ENCODE measurements at regions of chrX and their contacts with region 1.

Region 1: GRCh38 chrX:18390941-18391538 is 34.4 kb upstream of the CDKL5 start:
- DNase-seq: peak; percentile 53
- H3K4me3 ChIP-seq: no peak overlapping the region
- H3K27ac ChIP-seq: no peak overlapping the region
- H3K4me1 ChIP-seq: no peaks in the 10 kb centered on the region
- H3K27me3 ChIP-seq: no peaks in the 10 kb centered on the region
- CTCF ChIP-seq: peak; percentile 54 to 73 (median 65)
- POLR2A ChIP-seq: no peak

Region 2: GRCh38 chrX:18173494-18174180 is 217.4 kb before region 1 on chrX:
- intact Hi-C with region 1: no loop called
- DNase-seq: no peak
- H3K4me3 ChIP-seq: no peak overlapping the region
- H3K27ac ChIP-seq: no peak overlapping the region
- H3K4me1 ChIP-seq: no peaks in the 10 kb centered on the region
- H3K27me3 ChIP-seq: no peaks in the 10 kb centered on the region
- CTCF ChIP-seq: no peak
- POLR2A ChIP-seq: no peak

Region 3: DNA sequence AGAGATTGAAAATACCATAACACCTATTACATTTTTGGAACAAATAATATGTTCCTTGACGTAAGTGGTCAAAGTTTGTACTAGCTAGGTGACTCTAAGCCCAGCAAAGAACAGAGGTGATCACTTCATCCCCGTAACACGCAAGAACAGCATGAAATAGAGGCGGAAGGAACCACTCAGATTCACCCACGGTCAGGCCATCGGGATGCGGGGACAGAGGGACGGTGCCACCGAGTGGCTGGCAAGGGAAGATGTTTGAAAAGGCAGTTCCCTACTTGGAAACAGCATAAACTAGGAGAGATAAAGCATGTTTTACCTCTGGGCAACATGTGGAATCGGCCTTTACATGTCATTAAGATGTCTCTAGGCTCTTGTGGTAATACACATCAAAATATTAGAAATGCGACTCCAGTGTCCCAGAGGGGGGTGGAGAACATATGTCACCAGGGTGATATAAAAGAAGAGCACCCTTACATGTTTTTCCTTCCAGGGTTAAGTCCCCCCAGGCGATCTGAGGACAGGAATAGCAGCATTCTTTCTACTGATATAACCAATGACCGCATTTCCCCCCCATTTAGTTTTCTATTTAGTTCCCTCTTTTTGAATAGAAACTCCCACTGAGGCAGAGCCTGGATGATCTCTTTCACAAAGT is 508.9 kb after region 1 on chrX:
- intact Hi-C with region 1: loop called (anchors 5 kb)
- DNase-seq: peak; percentile 19
- H3K4me3 ChIP-seq: no peak overlapping the region
- H3K27ac ChIP-seq: peak overlapping the region in 1 of 2 donors; percentile 41
- H3K4me1 ChIP-seq: no peaks in the 10 kb centered on the region
- H3K27me3 ChIP-seq: no peaks in the 10 kb centered on the region
- CTCF ChIP-seq: peak in 2 of 4 experiments; percentile 21 to 37
- POLR2A ChIP-seq: no peak

Region 4: GRCh38 chrX:19334945-19335626 is 944.0 kb after region 1 on chrX:
- intact Hi-C with region 1: loop called (anchors 5 kb)
- DNase-seq: no peak
- H3K4me3 ChIP-seq: no peak overlapping the region
- H3K27ac ChIP-seq: no peak overlapping the region
- H3K4me1 ChIP-seq: no peaks in the 10 kb centered on the region
- H3K27me3 ChIP-seq: no peaks in the 10 kb centered on the region
- CTCF ChIP-seq: no peak
- POLR2A ChIP-seq: no peak